ENCODE measurements at regions of chr3 and their contacts with region 1.

Region 1: DNA sequence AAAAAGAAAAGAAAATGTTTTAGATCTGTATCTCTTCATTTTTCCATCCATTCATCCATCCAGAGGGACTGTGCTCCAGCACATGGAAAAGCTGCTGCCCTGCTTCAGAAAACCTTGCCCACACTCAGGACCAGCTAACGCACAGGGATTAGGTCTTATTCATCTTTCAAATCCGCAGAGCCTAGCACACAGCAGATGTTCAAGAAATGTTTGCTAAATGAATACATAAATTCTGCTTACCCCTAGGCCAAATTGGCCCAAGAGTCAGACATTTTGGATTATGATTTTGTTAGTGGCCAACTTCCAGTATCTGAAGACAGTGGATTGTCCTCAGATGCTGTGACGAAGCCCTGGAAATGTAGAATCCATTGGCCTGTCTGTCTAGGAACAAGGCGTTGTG is 71.4 kb downstream of the GHSR start:
- DNase-seq: no peak
- H3K4me3 ChIP-seq: no peak overlapping the region
- H3K27me3 ChIP-seq: no peaks in the 10 kb centered on the region
- CTCF ChIP-seq: no peak

Region 2: GRCh38 chr3:172249039-172249438 is 127.8 kb before region 1 on chr3:
- CTCF ChIA-PET with region 1: no interaction called
- POLR2A ChIA-PET with region 1: no interaction called
- DNase-seq: no peak
- H3K4me3 ChIP-seq: no peak overlapping the region
- H3K27me3 ChIP-seq: no peaks in the 10 kb centered on the region
- CTCF ChIP-seq: no peak

Region 3: DNA sequence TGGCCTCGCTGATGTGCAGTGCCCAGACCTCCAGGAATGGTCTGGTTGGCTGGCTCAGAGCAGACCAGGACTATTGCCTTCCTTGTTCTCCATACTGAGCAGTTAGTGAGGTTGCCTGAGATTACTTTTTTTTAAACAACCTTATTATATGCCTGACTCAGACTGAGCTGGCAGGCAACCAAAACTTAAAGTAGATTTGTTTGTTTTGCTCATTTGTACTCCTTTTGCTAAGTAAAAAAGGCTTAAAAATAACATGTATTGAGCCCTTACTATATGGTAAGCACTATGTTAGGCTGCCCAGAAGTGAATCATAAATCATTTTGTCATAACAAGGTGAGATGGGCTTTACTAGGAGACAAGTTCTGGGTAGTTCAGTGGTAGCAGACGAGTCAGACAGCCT is 21.0 kb before region 1 on chr3:
- CTCF ChIA-PET with region 1: no interaction called
- POLR2A ChIA-PET with region 1: no interaction called
- DNase-seq: peak; percentile 65
- H3K4me3 ChIP-seq: no peak overlapping the region
- H3K27me3 ChIP-seq: no peaks in the 10 kb centered on the region
- CTCF ChIP-seq: no peak

Region 4: DNA sequence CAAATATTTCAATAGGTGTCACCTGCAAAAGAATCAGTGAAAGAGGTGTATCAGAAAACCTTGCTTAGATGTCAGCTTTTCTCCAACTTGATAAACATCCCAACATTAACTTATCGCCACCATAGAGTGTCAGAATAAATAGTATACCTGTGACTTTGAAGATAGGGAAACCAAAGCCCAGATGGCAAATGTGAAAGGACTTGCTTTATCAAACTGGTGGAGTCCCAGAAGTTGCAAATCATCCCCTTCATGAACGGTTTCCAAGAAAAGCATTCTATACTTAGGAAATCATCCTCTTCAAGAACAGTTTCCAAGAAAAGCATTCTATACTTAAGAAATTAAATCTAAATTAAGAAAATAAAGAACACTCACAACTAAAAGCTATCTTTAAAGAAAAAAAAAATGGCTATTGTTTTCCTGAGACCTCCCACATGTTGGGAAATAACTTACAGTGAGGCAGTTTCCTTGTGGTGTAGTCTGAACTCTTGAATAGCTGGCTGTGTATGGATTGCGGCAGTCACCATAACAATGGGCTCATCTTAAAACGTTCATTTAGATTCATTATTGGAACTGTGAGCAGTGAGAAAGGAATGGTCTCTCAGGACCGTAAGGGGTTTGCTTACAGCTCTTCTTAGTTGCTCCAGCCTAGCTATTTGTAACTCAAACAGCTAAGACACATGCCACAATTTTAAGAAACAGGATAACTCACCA is 14.9 kb after region 1 on chr3:
- CTCF ChIA-PET with region 1: no interaction called
- POLR2A ChIA-PET with region 1: interaction called, 20 read pairs
- DNase-seq: no peak
- H3K4me3 ChIP-seq: no peak overlapping the region
- H3K27me3 ChIP-seq: no peaks in the 10 kb centered on the region
- CTCF ChIP-seq: no peak

Region 5: DNA sequence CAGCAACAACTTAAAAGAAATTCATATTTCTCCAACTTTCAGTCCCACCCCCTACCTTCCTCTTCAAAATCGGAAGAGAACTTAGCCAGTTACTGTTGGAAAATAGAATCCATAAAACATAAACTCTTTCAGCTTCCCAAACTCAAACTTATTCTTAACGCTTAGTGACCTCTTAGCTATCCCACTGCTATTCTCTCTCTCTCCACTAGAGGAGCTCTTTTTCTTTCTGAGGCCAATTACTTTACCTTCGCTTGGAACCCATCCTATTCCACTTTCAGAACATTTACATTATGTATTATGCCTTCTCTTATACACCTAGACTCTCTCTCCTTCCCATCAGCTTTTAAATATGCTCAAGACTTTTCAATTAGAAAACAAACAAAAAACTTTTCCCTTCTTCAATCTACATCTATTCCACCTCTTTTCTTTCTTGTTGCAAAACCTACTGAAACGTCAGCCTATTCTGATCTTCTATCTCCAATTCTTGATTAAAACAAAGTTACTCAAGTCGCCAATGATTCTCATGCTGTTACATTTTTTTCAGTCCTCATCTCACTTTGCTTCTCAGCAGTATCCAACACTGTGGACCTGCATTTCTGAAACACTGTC is 84.8 kb after region 1 on chr3:
- CTCF ChIA-PET with region 1: no interaction called
- POLR2A ChIA-PET with region 1: no interaction called
- DNase-seq: no peak
- H3K4me3 ChIP-seq: no peak overlapping the region
- H3K27me3 ChIP-seq: no peaks in the 10 kb centered on the region
- CTCF ChIP-seq: peak; percentile 89

Region 6: GRCh38 chr3:172595641-172596393 is 218.9 kb after region 1 on chr3:
- CTCF ChIA-PET with region 1: no interaction called
- POLR2A ChIA-PET with region 1: no interaction called
- DNase-seq: no peak
- H3K4me3 ChIP-seq: no peak overlapping the region
- H3K27me3 ChIP-seq: no peaks in the 10 kb centered on the region; the same call in 1 of the 2 replicates
- CTCF ChIP-seq: peak; percentile 64

Measured in BJ (cell line).